Activated T-helper 2 cell treated with anti-CD3 and anti-CD28 coated beads, Interferon-gamma antibody, Interleukin-2, Interleukin-4, amounts not matched to agents 10 μg/mL and 5 μg/mL and 100 μg/mL, durations not matched to agents 14 hours and 24 hours and 36 hours (primary cell): ENCODE measurements at regions of chr22 and their contacts with region 1.

Region 1: GRCh38 chr22:17057959-17058814 is 26.6 kb upstream of the IL17RA start:
- DNase-seq: peak; percentile 19
- H3K4me3 Mint-ChIP-seq: no peak overlapping the region
- H3K27ac Mint-ChIP-seq: no peak overlapping the region
- H3K4me1 Mint-ChIP-seq: peaks cover 5% of the 10 kb centered on the region
- H3K27me3 Mint-ChIP-seq: peaks cover 3% of the 10 kb centered on the region

Region 2: DNA sequence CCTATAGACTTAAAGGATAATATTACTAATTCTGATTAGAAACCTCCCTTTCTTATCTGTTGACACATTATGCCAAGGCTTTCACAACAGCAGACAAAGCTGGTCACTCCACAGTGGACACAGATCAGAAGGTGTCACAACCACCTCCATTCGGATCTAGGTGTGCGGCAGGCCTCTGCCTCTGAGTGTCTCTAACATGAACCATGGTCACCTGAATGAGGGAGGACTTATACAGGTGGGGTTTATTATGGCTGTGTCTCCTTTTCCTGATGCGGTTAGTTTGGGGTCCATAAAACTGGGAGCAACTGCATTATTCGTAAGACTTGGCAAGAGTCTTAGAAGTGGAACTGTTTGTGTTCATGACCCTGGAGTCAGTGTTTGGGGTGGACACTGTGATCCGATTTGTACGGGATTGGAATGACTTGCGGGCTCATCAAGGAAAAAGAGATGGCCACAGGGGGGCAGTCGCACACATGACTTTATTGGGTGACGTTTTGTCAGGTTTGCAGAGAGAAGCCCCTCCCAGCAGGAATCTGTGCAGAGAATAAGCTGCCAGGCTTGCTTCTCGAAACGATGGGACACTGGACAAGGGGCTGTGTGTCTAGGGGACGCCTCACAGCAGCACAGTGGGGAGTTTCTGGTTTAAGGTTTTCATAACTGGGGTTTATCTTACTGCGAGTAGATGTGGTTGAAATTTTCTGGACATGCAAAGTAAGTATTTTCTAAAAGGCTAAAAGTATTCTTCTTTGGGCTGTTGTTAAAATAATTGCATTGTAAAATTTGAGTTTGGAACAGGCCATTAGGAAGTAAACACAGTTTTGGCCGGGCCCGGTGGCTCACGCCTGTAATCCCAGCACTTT is 140.8 kb before region 1 on chr22:
- intact Hi-C with region 1: loop called (anchors 1 kb)
- DNase-seq: peak; percentile 38
- H3K4me3 Mint-ChIP-seq: no peak overlapping the region
- H3K27ac Mint-ChIP-seq: no peak overlapping the region
- H3K4me1 Mint-ChIP-seq: peaks cover 16% of the 10 kb centered on the region
- H3K27me3 Mint-ChIP-seq: peaks cover 2% of the 10 kb centered on the region

Region 3: GRCh38 chr22:17074648-17075002 is 16.4 kb after region 1 on chr22:
- intact Hi-C with region 1: no loop called
- DNase-seq: no peak
- H3K4me3 Mint-ChIP-seq: no peak overlapping the region
- H3K27ac Mint-ChIP-seq: no peak overlapping the region
- H3K4me1 Mint-ChIP-seq: peaks cover 23% of the 10 kb centered on the region
- H3K27me3 Mint-ChIP-seq: peaks cover 28% of the 10 kb centered on the region

Region 4: GRCh38 chr22:17084554-17085276 is 26.5 kb after region 1 on chr22 and contains the start of gene IL17RA:
- intact Hi-C with region 1: no loop called
- DNase-seq: peak; percentile 94
- H3K4me3 Mint-ChIP-seq: peak within 1 kb of the TSS; percentile 88
- H3K27ac Mint-ChIP-seq: peak within 1 kb of the TSS; percentile 86
- H3K4me1 Mint-ChIP-seq: peaks cover 40% of the 10 kb centered on the region
- H3K27me3 Mint-ChIP-seq: no peaks in the 10 kb centered on the region
- total RNA-seq, gene IL17RA: 16.8 and 17.6 TPM in 2 replicates

Region 5: GRCh38 chr22:17095538-17095937 is 37.4 kb after region 1 on chr22:
- intact Hi-C with region 1: no loop called
- DNase-seq: no peak
- H3K4me3 Mint-ChIP-seq: no peak overlapping the region
- H3K27ac Mint-ChIP-seq: no peak overlapping the region
- H3K4me1 Mint-ChIP-seq: peaks cover 66% of the 10 kb centered on the region
- H3K27me3 Mint-ChIP-seq: no peaks in the 10 kb centered on the region